Panc1 (cell line): ENCODE measurements at regions of chr4 and their contacts with region 1.

Region 1: DNA sequence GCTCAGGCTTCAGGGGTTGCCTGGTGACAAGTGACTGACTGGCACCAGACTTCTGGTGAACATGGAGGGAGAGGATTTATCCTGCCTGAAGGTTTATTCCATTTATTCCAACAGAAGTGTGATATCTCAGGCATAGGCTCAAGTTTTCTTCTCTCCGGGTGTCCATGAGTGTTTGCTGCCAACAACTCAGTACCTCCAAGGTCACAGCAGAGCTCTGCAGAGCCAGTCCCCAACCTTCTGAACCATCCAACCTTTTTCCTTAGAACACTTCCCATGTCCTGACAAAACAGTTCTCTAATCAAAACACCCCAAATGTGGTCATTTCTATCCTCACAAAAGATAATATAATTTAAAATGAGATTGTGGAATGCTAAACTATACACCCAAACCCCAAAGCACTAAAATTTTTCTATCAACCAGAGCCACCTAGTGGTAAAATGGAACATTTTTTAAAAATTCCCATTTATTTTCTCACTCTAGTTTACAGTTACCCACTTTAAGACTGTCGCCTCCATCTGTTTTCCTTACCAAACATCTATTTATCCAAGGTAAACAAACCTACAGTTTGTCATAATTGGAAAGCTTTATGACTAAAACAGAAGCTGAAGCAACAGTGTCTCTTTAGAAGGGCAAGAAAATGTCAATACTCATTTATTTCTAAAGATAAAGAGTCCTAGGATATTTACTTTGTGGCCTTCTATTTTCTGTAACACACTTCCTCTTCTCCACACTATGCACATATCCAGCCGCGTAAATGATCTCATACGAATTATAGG is 39.6 kb downstream of the TMEM154 start:
- DNase-seq: peak; percentile 7
- ATAC-seq: peak; percentile 45; the same call in 1 of the 2 replicates
- H3K4me3 ChIP-seq: no peak overlapping the region
- H3K27ac ChIP-seq: no peak overlapping the region
- H3K4me1 ChIP-seq: no peaks in the 10 kb centered on the region; the same call in 1 of the 2 replicates
- H3K27me3 ChIP-seq: no peaks in the 10 kb centered on the region
- CTCF ChIP-seq: peak; percentile 57

Region 2: DNA sequence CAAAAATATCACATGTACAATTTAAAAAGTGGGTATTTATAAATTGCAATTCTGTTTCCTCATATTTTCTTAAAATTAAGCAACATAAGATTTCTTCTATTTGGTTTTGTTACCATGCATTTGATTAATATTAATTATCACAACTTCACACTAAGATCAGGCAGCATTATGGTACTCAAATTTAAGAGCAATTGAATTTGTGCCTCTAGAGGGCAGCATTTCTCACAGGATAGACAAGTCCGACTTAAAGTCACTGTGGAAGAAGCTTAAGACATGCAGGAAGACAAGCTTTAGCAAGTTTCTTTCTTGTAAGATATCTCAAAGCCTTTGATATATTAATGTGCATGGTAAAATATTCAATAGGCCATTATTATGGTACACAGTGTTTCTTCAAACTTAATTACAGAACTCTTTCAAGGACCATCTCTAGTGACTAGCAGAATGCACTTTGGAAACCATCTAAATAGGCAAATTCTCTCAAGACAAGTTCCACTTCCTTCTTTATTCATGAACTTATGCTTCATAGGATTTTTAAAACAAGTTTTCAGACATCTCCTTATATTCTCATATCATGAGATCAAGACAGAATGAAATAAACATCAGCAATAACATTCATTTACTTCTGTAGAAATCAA is 139.3 kb before region 1 on chr4:
- CTCF ChIA-PET with region 1: interaction called, 12 read pairs
- POLR2A ChIA-PET with region 1: no interaction called
- in situ Hi-C with region 1: no loop called
- intact Hi-C with region 1: loop called (anchors 2 kb)
- DNase-seq: peak; percentile 50
- ATAC-seq: peak; percentile 76; the same call in 1 of the 2 replicates
- H3K4me3 ChIP-seq: no peak overlapping the region
- H3K27ac ChIP-seq: no peak overlapping the region
- H3K4me1 ChIP-seq: no peaks in the 10 kb centered on the region; the same call in 1 of the 2 replicates
- H3K27me3 ChIP-seq: no peaks in the 10 kb centered on the region
- CTCF ChIP-seq: peak; percentile 69; the same call in 1 of the 2 replicates